Activated CD4-positive, alpha-beta T cell treated with anti-CD3 and anti-CD28 coated beads for 36 hours (primary cell): ENCODE measurements at regions of chr3 and their contacts with region 1.

Region 1: GRCh38 chr3:10344147-10344943 is 23.4 kb upstream of the SEC13 start:
- DNase-seq: peak; percentile 72
- ATAC-seq: peak; percentile 71
- H3K4me3 Mint-ChIP-seq: no peak overlapping the region
- H3K27ac Mint-ChIP-seq: no peak overlapping the region
- H3K4me1 Mint-ChIP-seq: no peaks in the 10 kb centered on the region
- H3K27me3 Mint-ChIP-seq: peaks cover 2% of the 10 kb centered on the region

Region 2: GRCh38 chr3:10299679-10300078 is 44.7 kb before region 1 on chr3:
- CTCF ChIA-PET with region 1: no interaction called
- POLR2A ChIA-PET with region 1: no interaction called
- intact Hi-C with region 1: no loop called
- DNase-seq: no peak
- ATAC-seq: peak; percentile 71
- H3K4me3 Mint-ChIP-seq: no peak overlapping the region
- H3K27ac Mint-ChIP-seq: peak overlapping the region; percentile 83
- H3K4me1 Mint-ChIP-seq: peaks cover 12% of the 10 kb centered on the region
- H3K27me3 Mint-ChIP-seq: no peaks in the 10 kb centered on the region

Region 3: DNA sequence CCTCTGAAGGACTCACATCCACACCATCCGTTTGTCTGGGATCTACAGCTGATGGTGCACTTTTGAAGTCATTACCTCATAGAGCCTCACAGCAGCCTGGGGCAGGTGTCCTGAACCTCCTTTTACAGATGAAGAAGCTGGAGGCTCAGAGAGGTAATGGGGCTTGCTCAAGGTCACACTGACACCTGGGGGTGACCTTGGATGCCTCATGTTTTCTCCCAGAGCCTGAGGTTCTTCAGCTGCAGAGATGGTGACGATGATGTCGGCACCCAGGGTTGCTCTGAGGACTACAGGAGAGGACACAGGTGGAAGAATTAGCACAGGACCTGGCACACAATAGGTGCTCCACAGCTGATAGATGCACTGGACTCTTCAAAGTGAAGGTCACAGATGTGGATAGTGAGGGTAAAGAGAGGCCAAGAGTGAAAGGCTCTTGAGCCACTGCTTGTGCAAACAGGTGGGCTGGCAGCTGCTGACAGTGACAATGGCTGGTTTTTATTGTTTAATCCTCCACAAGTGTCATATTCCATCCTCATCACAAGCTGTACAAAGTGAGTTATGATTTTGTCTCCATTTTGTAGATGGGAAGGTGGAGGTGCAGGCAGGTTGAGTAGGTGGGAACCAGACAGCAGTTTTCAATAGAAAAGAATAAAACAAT is 178.4 kb after region 1 on chr3:
- CTCF ChIA-PET with region 1: no interaction called
- POLR2A ChIA-PET with region 1: no interaction called
- intact Hi-C with region 1: loop called in 1 of 2 experiments (anchors 10 kb)
- DNase-seq: no peak
- ATAC-seq: no peak
- H3K4me3 Mint-ChIP-seq: no peak overlapping the region
- H3K27ac Mint-ChIP-seq: no peak overlapping the region
- H3K4me1 Mint-ChIP-seq: no peaks in the 10 kb centered on the region
- H3K27me3 Mint-ChIP-seq: peaks cover 18% of the 10 kb centered on the region

Region 4: GRCh38 chr3:10693460-10693859 is 349.1 kb after region 1 on chr3:
- CTCF ChIA-PET with region 1: no interaction called
- POLR2A ChIA-PET with region 1: no interaction called
- intact Hi-C with region 1: loop called in 1 of 2 experiments (anchors 1 kb)
- DNase-seq: no peak
- ATAC-seq: no peak
- H3K4me3 Mint-ChIP-seq: no peak overlapping the region
- H3K27ac Mint-ChIP-seq: no peak overlapping the region
- H3K4me1 Mint-ChIP-seq: no peaks in the 10 kb centered on the region
- H3K27me3 Mint-ChIP-seq: peaks cover 14% of the 10 kb centered on the region

Region 5: GRCh38 chr3:10738688-10739372 is 394.5 kb after region 1 on chr3:
- CTCF ChIA-PET with region 1: interaction called, 9 read pairs
- POLR2A ChIA-PET with region 1: no interaction called
- intact Hi-C with region 1: loop called (anchors 1 kb)
- DNase-seq: peak; percentile 85
- ATAC-seq: peak; percentile 79
- H3K4me3 Mint-ChIP-seq: no peak overlapping the region
- H3K27ac Mint-ChIP-seq: no peak overlapping the region
- H3K4me1 Mint-ChIP-seq: peaks cover 2% of the 10 kb centered on the region
- H3K27me3 Mint-ChIP-seq: peaks cover 41% of the 10 kb centered on the region